Activated CD4-positive, alpha-beta memory T cell treated with anti-CD3 and anti-CD28 coated beads for 36 hours (primary cell): ENCODE measurements at regions of chr2 and their contacts with region 1.

Region 1: DNA sequence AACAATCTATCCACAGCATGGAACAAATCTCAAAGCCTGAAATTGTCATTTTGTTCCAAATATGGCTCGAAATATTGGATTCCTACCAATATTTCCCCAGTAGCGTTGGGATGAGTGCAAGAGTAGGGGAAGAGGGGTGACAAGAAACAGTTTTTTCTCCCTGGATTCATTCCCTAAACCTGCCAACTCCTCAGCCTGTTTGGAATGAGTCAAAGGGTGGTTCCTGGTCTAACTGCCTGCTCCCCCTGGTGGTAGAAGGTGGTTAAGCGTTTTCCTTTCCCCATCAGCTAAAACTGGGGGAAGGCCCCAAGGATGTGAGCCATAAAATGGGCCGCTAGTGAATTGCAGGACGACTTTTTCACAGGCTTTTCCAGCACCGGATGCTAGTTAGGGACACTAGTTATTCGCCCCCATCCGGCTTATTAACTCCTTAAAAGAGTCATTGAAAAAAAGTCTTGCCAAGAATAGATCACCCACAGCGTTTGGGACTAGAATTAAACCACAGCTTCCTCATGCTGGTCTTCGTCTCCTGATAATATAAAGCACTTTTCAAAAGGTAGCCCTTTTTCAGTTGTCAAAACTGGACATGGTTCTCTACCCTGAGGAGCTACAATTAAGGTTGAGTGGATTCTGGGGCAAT is 72.5 kb downstream of the DHRS9 start:
- DNase-seq: peak; percentile 70
- H3K4me3 Mint-ChIP-seq: no peak overlapping the region
- H3K27ac Mint-ChIP-seq: no peak overlapping the region
- H3K4me1 Mint-ChIP-seq: no peaks in the 10 kb centered on the region
- H3K27me3 Mint-ChIP-seq: no peaks in the 10 kb centered on the region

Region 2: GRCh38 chr2:168961450-168962229 is 180.2 kb before region 1 on chr2:
- CTCF ChIA-PET with region 1: interaction called, 69 read pairs
- POLR2A ChIA-PET with region 1: no interaction called
- intact Hi-C with region 1: loop called (anchors 1 kb)
- DNase-seq: no peak
- H3K4me3 Mint-ChIP-seq: no peak overlapping the region
- H3K27ac Mint-ChIP-seq: no peak overlapping the region
- H3K4me1 Mint-ChIP-seq: peaks cover 36% of the 10 kb centered on the region
- H3K27me3 Mint-ChIP-seq: no peaks in the 10 kb centered on the region

Region 3: GRCh38 chr2:168974428-168974827 is 167.4 kb before region 1 on chr2:
- CTCF ChIA-PET with region 1: interaction called, 14 read pairs
- POLR2A ChIA-PET with region 1: no interaction called
- intact Hi-C with region 1: no loop called
- DNase-seq: no peak
- H3K4me3 Mint-ChIP-seq: no peak overlapping the region
- H3K27ac Mint-ChIP-seq: no peak overlapping the region
- H3K4me1 Mint-ChIP-seq: no peaks in the 10 kb centered on the region
- H3K27me3 Mint-ChIP-seq: no peaks in the 10 kb centered on the region

Region 4: DNA sequence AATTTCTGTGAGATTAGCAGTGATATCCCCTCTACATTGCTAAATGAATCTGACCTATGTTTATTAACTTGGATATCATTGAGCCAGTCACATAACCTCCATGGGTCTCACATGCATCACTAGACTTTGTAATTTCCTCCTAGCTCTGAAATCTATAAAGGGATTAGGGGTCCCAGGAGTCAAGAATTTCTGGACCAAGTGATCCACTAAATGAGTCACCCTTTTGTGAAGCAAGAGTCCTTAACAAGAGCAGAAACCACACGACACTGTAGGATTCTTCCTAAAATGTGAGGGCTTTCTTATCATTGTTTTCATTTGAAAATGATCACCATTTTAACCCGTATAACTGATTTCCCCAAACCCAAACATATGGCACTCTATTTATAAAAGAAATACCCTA is 17.9 kb after region 1 on chr2:
- CTCF ChIA-PET with region 1: interaction called, 14 read pairs
- POLR2A ChIA-PET with region 1: no interaction called
- intact Hi-C with region 1: no loop called
- DNase-seq: no peak
- H3K4me3 Mint-ChIP-seq: no peak overlapping the region
- H3K27ac Mint-ChIP-seq: no peak overlapping the region
- H3K4me1 Mint-ChIP-seq: no peaks in the 10 kb centered on the region
- H3K27me3 Mint-ChIP-seq: peaks cover 5% of the 10 kb centered on the region

Region 5: DNA sequence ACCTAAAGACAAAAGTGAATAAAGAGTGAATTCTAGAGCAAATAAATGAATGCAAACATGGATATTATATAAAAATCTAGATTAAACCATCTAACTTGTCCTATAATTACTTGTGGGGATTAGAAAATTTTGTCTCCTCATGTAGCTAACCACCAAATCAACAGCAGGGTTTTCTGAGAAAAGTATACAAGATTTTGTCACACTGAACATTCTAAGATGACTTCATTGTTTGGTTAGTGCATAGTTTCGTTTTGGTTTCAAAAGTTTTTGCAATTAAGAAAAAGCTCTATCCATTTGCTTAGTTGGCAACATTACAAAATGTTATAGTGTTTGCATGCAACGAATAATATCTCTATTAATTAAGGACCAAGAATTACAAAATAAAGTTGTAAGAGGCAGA is 95.5 kb after region 1 on chr2:
- CTCF ChIA-PET with region 1: no interaction called
- POLR2A ChIA-PET with region 1: no interaction called
- intact Hi-C with region 1: no loop called
- DNase-seq: no peak
- H3K4me3 Mint-ChIP-seq: no peak overlapping the region
- H3K27ac Mint-ChIP-seq: no peak overlapping the region
- H3K4me1 Mint-ChIP-seq: no peaks in the 10 kb centered on the region
- H3K27me3 Mint-ChIP-seq: peaks cover 18% of the 10 kb centered on the region

Region 6: GRCh38 chr2:169397697-169398096 is 255.9 kb after region 1 on chr2:
- CTCF ChIA-PET with region 1: interaction called, 3 read pairs
- POLR2A ChIA-PET with region 1: no interaction called
- intact Hi-C with region 1: loop called (anchors 10 kb)
- DNase-seq: no peak
- H3K4me3 Mint-ChIP-seq: no peak overlapping the region
- H3K27ac Mint-ChIP-seq: no peak overlapping the region
- H3K4me1 Mint-ChIP-seq: no peaks in the 10 kb centered on the region
- H3K27me3 Mint-ChIP-seq: peaks cover 21% of the 10 kb centered on the region